GM10248 (cell line): ENCODE measurements at regions of chr1 and their contacts with region 1.

Region 1: GRCh38 chr1:114418247-114418646 is 92.8 kb downstream of the TRIM33 start:
- DNase-seq: no peak
- CTCF ChIP-seq: no peak

Region 2: DNA sequence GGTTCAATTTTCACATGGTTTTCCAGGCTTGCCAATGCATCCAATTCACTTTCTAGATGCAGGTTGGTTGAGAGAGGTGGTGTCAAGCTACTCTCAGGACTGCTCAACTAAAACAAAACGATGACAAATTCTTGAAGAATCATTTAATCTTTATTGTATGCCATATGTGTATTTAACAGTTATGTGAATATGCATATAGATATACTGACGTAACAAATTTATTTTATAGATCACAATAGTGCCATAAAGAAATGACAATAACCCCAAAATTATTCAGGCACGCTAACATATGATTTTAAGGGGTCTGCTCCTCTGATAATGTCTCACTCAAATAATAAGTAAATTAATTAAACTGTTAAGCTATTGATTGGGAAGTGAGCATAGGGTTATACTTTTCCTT is 12.6 kb before region 1 on chr1:
- CTCF ChIA-PET with region 1: interaction called, 17 read pairs
- POLR2A ChIA-PET with region 1: no interaction called
- DNase-seq: no peak
- CTCF ChIP-seq: no peak